MCF 10A (cell line): ENCODE measurements at regions of chr9 and their contacts with region 1.

Region 1: DNA sequence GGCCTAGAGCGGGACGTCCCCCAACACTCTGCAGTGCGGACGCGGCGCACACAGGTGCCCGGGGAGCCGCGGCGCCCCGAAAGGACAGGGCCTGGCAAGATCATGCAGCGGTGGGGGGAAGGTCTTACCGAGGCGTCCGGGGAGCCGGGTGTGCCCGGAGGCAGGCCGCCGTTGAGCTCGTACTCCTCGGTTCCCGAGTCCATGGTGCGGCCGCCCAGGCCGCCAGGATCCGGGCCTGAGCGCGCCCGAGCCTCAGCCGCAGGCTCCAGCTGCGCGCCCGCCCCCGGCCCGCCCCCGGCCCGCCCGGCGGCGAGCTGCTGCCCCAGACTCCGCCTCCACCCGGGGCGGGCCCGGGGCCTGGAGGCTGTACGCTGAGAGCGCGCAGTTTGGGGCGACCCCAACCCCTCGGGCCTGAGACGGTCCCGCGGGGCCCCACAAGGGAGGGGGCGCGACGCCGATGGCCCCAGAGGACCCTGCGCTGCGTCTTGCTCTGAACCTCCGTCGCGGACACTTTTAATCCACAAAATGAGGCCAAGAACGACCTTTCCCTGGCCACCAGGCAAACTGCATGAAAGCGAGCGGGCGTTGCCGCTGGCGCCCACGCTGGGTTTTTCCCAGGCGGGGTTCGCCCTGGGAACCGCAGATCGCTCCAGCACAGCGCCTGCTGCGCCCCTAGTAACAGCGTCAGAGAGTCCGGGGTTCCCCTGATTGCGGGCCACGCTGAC is at the start of gene NINJ1:
- DNase-seq: peak; percentile 75
- H3K4me3 Mint-ChIP-seq: peak within 1 kb of the TSS; percentile 78
- H3K27ac Mint-ChIP-seq: peak within 1 kb of the TSS; percentile 77
- H3K4me1 Mint-ChIP-seq: peaks cover 15% of the 10 kb centered on the region
- H3K27me3 Mint-ChIP-seq: no peaks in the 10 kb centered on the region
- CTCF ChIP-seq: no peak
- total RNA-seq, gene NINJ1: 51.0 and 64.7 TPM in 2 replicates

Region 2: GRCh38 chr9:92808726-92809451 is 325.3 kb before region 1 on chr9:
- CTCF ChIA-PET with region 1: no interaction called
- POLR2A ChIA-PET with region 1: no interaction called
- intact Hi-C with region 1: no loop called
- DNase-seq: peak; percentile 48
- H3K4me3 Mint-ChIP-seq: peak overlapping the region; percentile 30
- H3K27ac Mint-ChIP-seq: no peak overlapping the region
- H3K4me1 Mint-ChIP-seq: no peaks in the 10 kb centered on the region
- H3K27me3 Mint-ChIP-seq: peaks cover 48% of the 10 kb centered on the region
- CTCF ChIP-seq: peak; percentile 2

Region 3: DNA sequence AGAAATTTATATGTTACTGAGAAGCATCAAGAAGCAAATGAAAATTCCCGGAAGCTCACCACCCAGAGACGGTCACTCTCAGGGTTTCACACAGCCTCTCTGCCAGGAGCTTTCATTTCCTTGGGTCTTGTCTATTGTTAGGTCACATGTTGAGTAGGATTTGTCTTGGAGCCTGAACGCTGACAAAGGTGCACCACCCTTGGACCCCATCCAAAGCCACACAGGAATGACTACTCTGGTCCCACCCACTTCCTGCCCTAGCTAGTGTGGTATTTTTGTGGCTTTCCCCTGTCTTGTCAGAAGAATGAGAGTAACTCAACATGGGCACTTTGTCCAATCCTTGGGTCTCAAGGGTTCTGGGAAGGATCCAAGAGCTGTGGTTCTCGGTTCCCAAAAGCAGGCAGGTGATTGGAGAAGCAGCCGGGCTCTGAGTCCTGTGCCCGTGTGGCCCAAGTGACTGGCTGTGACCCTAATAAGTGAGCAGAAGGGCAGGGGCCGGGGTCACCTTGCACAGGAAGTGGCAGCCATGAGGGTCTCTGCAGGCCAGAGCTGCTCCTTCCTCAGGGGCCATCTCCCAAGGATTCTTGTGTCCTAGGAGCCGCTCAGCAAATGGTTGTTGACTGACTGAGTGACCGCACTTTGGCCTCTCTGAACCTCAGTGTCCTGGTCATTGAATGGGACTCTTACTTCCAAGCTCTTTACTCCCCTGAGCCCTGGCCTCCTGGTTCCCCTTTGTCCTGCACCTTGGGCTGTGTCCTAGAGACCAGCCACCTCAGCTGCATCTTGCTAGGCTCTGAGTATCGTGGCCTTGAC is 179.9 kb before region 1 on chr9:
- CTCF ChIA-PET with region 1: interaction called, 3 read pairs
- POLR2A ChIA-PET with region 1: no interaction called
- intact Hi-C with region 1: loop called (anchors 10 kb)
- DNase-seq: peak; percentile 85
- H3K4me3 Mint-ChIP-seq: peak overlapping the region; percentile 52
- H3K27ac Mint-ChIP-seq: peak overlapping the region; percentile 71
- H3K4me1 Mint-ChIP-seq: peaks cover 21% of the 10 kb centered on the region
- H3K27me3 Mint-ChIP-seq: no peaks in the 10 kb centered on the region
- CTCF ChIP-seq: no peak

Region 4: GRCh38 chr9:93095205-93096130 is 38.7 kb before region 1 on chr9:
- CTCF ChIA-PET with region 1: no interaction called
- POLR2A ChIA-PET with region 1: interaction called, 37 read pairs
- intact Hi-C with region 1: loop called (anchors 5 kb)
- DNase-seq: peak; percentile 98
- H3K4me3 Mint-ChIP-seq: peak overlapping the region; percentile 78
- H3K27ac Mint-ChIP-seq: peak overlapping the region; percentile 82
- H3K4me1 Mint-ChIP-seq: peaks cover 33% of the 10 kb centered on the region
- H3K27me3 Mint-ChIP-seq: no peaks in the 10 kb centered on the region
- CTCF ChIP-seq: no peak

Region 5: GRCh38 chr9:93119953-93120845 is 14.0 kb before region 1 on chr9:
- CTCF ChIA-PET with region 1: interaction called, 4 read pairs
- POLR2A ChIA-PET with region 1: interaction called, 49 read pairs
- intact Hi-C with region 1: loop called (anchors 1 kb)
- DNase-seq: peak; percentile 99
- H3K4me3 Mint-ChIP-seq: peak overlapping the region; percentile 45
- H3K27ac Mint-ChIP-seq: peak overlapping the region; percentile 94
- H3K4me1 Mint-ChIP-seq: peaks cover 22% of the 10 kb centered on the region
- H3K27me3 Mint-ChIP-seq: no peaks in the 10 kb centered on the region
- CTCF ChIP-seq: peak; percentile 29